ENCODE measurements at regions of chr5 and their contacts with region 1.

Region 1: DNA sequence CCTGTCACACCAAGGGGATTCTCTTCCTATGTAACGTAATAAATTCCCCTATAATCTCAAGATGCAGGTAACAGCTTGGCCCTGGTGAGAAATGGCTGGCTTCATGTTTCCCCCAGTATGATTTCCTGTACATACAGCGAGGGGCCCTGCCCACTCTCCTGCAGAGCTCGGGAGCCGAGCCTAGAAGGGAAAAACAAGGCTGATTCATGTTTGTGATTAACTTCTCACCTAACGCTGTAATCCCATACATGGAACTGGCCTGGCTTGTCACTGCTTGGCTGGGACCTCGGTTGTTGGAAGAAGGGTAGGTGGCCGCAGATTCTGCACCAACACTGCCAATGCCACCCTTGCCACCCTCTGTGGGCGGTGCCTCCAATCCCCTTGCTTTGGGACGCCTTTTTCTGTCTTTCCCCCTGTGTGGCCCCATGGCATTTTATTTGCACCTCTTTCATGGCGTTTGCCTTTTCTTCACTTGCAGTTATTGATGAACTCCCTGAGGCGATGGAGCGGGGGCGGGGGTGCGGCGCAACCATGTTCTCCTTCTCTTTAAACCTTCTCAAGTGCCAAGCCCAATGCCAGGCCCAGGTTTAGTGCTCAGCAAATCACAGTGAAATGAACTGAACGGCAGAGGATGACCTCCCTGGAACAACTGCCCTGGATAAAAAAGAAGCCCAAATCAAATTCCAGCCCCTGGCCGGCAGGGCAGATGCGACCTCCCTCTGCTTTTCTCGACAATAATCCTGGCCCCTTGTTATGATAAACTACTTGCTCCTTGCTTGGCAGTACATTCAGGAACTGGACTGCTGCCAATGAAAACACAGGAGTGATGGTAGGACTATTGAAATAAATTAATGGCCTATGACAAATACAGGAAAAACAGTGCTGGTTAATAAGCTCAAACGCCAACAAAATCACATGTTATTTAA is 108.1 kb downstream of the TMEM174 start:
- DNase-seq: peak; percentile 41 to 79
- H3K4me3 ChIP-seq: no peak overlapping the region
- H3K27ac ChIP-seq: no peak overlapping the region
- H3K4me1 ChIP-seq: peaks cover 29% of the 10 kb centered on the region
- H3K27me3 ChIP-seq: no peaks in the 10 kb centered on the region
- CTCF ChIP-seq: no peak

Region 2: GRCh38 chr5:73229209-73229661 is 51.8 kb before region 1 on chr5:
- CTCF ChIA-PET with region 1: no interaction called
- POLR2A ChIA-PET with region 1: interaction called, 3 read pairs
- intact Hi-C with region 1: loop called (anchors 2 kb)
- DNase-seq: peak; percentile 41 to 77
- H3K4me3 ChIP-seq: no peak overlapping the region
- H3K27ac ChIP-seq: 0 out of 2 replicates have a peak overlapping the region, but pooled peaks have one; percentile 4
- H3K4me1 ChIP-seq: peaks cover 15% of the 10 kb centered on the region
- H3K27me3 ChIP-seq: no peaks in the 10 kb centered on the region
- CTCF ChIP-seq: no peak

Region 3: GRCh38 chr5:73338256-73339050 is 57.4 kb after region 1 on chr5:
- CTCF ChIA-PET with region 1: no interaction called
- POLR2A ChIA-PET with region 1: no interaction called
- intact Hi-C with region 1: no loop called
- DNase-seq: no peak
- H3K4me3 ChIP-seq: no peak overlapping the region
- H3K27ac ChIP-seq: no peak overlapping the region
- H3K4me1 ChIP-seq: no peaks in the 10 kb centered on the region
- H3K27me3 ChIP-seq: no peaks in the 10 kb centered on the region
- CTCF ChIP-seq: no peak